Activated T-helper 2 cell treated with anti-CD3 and anti-CD28 coated beads, Interferon-gamma antibody, Interleukin-2, Interleukin-4, amounts not matched to agents 10 μg/mL and 5 μg/mL and 100 μg/mL, durations not matched to agents 14 hours and 24 hours and 36 hours (primary cell): ENCODE measurements at regions of chr11 and their contacts with region 1.

Region 1: GRCh38 chr11:14764579-14765527 is 121.2 kb downstream of the PDE3B start:
- DNase-seq: peak; percentile 46
- H3K4me3 Mint-ChIP-seq: peak overlapping the region; percentile 64
- H3K27ac Mint-ChIP-seq: no peak overlapping the region
- H3K4me1 Mint-ChIP-seq: peaks cover 36% of the 10 kb centered on the region
- H3K27me3 Mint-ChIP-seq: no peaks in the 10 kb centered on the region

Region 2: GRCh38 chr11:14537134-14537599 is 227.7 kb before region 1 on chr11:
- intact Hi-C with region 1: loop called (anchors 2 kb)
- DNase-seq: no peak
- H3K4me3 Mint-ChIP-seq: peak overlapping the region; percentile 63
- H3K27ac Mint-ChIP-seq: peak overlapping the region; percentile 74
- H3K4me1 Mint-ChIP-seq: peaks cover 28% of the 10 kb centered on the region
- H3K27me3 Mint-ChIP-seq: no peaks in the 10 kb centered on the region

Region 3: GRCh38 chr11:14578541-14578956 is 186.3 kb before region 1 on chr11:
- intact Hi-C with region 1: loop called (anchors 1 kb)
- DNase-seq: peak; percentile 71
- H3K4me3 Mint-ChIP-seq: peak overlapping the region; percentile 42
- H3K27ac Mint-ChIP-seq: peak overlapping the region; percentile 87
- H3K4me1 Mint-ChIP-seq: peaks cover 45% of the 10 kb centered on the region
- H3K27me3 Mint-ChIP-seq: no peaks in the 10 kb centered on the region

Region 4: GRCh38 chr11:14713496-14714244 is 51.2 kb before region 1 on chr11:
- intact Hi-C with region 1: loop called (anchors 5 kb)
- DNase-seq: peak; percentile 10
- H3K4me3 Mint-ChIP-seq: peak overlapping the region; percentile 2
- H3K27ac Mint-ChIP-seq: peak overlapping the region; percentile 71
- H3K4me1 Mint-ChIP-seq: peaks cover 16% of the 10 kb centered on the region
- H3K27me3 Mint-ChIP-seq: no peaks in the 10 kb centered on the region

Region 5: DNA sequence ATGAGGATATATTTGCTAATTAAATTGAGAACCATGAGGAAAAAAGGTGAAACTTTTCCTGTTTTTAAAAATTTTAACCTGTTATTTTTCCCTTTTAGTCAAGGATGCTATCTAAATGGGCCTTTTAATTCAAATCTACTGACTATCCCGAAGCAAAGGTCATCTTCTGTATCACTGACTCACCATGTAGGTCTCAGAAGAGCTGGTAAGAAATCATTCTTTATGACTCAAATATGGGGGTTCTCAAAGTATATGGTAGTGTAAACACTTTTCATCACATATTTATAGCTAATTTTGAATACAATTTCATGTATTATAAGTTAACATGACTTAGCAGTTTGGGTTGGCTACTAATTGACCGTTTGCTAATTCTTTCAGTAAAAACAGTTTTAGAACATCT is 39.0 kb after region 1 on chr11:
- intact Hi-C with region 1: loop called (anchors 5 kb)
- DNase-seq: no peak
- H3K4me3 Mint-ChIP-seq: no peak overlapping the region
- H3K27ac Mint-ChIP-seq: no peak overlapping the region
- H3K4me1 Mint-ChIP-seq: peaks cover 21% of the 10 kb centered on the region
- H3K27me3 Mint-ChIP-seq: no peaks in the 10 kb centered on the region

Region 6: DNA sequence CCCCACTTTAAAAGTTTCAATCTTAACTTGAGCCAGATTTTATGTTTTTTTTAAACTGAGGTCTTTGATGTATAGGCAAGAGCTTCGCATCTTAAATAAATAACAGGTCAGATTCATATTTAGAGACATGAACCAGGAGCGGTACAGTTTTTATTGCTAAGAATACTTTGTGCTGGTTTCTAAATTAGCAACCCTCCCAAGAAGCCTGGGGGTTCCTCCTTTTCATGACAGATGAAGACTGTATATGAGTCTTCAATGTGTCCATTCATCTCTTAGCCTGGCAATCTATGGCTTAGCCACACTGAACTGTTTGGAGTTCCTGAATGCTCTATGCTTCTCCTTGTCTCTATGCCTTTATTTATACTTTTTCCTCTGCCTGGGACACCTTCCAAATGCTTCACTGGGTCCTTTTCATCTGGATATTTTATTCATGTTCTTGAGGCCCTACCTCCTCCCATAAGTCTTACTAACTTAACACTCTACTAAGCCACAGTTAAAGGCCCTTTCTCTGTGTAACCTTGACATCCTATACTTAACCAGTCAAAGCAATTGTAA is 688.4 kb after region 1 on chr11:
- intact Hi-C with region 1: no loop called
- DNase-seq: no peak
- H3K4me3 Mint-ChIP-seq: no peak overlapping the region
- H3K27ac Mint-ChIP-seq: no peak overlapping the region
- H3K4me1 Mint-ChIP-seq: no peaks in the 10 kb centered on the region
- H3K27me3 Mint-ChIP-seq: no peaks in the 10 kb centered on the region